ENCODE measurements at regions of chr5 and their contacts with region 1.

Region 1: GRCh38 chr5:169296419-169297143 is 4.4 kb downstream of the SLIT3 start:
- DNase-seq: no peak
- H3K4me3 ChIP-seq: no peak overlapping the region
- H3K27ac ChIP-seq: peak overlapping the region; percentile 59
- H3K4me1 ChIP-seq: peaks cover 29% of the 10 kb centered on the region
- H3K27me3 ChIP-seq: no peaks in the 10 kb centered on the region
- CTCF ChIP-seq: no peak
- POLR2A ChIP-seq: no peak

Region 2: DNA sequence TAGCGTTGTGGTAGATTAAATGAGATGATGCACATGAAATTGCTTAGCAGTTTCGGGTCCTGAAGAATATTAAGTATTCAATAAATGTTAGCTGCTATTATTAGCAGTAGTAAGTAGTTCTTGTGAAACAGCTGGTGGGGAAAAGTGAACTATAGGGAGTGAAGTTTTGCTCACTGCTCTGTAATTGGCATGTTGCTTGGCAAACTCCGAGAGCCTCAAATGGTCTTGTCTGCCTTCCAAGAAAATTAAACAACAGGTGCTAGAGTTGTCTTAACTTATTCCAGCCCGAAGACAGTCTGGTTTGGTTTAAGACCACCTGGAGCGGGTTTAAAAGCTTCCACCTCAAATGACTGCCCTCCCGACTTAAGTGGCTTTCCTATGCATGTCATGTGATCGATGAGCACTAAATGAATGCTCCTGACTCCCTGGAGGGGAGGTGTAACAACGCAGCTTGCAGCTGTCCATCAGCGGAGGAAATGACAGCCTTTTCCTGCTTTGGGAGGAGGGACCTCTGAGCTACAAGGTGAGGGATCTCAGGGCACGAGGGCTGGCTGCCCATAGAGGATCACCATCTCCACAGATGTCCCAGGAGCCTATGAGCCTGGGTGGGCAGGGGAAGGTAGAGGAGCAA is 514.5 kb before region 1 on chr5:
- intact Hi-C with region 1: no loop called
- DNase-seq: no peak
- H3K4me3 ChIP-seq: no peak overlapping the region
- H3K27ac ChIP-seq: no peak overlapping the region
- H3K4me1 ChIP-seq: no peaks in the 10 kb centered on the region
- H3K27me3 ChIP-seq: no peaks in the 10 kb centered on the region
- CTCF ChIP-seq: no peak
- POLR2A ChIP-seq: no peak

Region 3: DNA sequence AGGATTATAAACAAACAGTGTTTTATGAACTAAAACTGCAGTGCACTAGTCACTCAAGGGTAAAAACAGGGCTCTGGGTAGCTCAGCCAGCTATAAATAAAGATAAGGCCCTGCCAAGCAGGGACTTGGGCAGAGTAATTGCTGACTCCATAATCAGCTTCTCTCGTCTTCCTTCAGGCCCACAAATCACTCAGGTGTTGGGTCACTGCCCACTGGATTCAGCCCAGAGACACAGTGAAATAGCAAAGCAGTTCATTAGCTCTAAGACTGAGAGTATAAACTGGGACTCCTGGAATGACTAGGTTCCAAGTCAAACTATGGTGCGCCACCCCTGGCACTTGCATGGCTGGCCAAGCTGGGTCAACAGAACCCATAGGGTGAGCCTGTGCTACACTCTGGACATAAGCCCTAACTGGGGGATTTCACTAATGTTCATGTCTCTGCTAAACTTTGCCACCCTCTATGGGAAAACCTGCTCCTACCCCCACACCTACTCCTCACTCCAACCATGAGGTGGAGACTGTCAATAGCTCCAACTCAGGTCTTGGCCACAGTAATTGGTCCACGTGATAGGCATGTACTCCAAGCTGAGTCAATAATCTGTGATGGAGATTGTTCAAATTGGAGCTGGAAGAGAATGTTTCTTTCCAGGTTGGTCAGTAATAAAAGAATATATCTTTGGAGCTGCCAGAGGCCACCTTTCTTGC is 154.2 kb before region 1 on chr5:
- intact Hi-C with region 1: no loop called
- DNase-seq: no peak
- H3K4me3 ChIP-seq: no peak overlapping the region
- H3K27ac ChIP-seq: no peak overlapping the region
- H3K4me1 ChIP-seq: peaks cover 26% of the 10 kb centered on the region
- H3K27me3 ChIP-seq: no peaks in the 10 kb centered on the region
- CTCF ChIP-seq: no peak
- POLR2A ChIP-seq: no peak

Region 4: GRCh38 chr5:169161022-169161680 is 135.4 kb before region 1 on chr5:
- intact Hi-C with region 1: loop called (anchors 10 kb)
- DNase-seq: peak in 1 of 2 donors; percentile 93
- H3K4me3 ChIP-seq: no peak overlapping the region
- H3K27ac ChIP-seq: peak overlapping the region; percentile 31
- H3K4me1 ChIP-seq: peaks cover 34% of the 10 kb centered on the region
- H3K27me3 ChIP-seq: no peaks in the 10 kb centered on the region
- CTCF ChIP-seq: no peak
- POLR2A ChIP-seq: no peak